GM10248 (cell line): ENCODE measurements at regions of chr6 and their contacts with region 1.

Region 1: GRCh38 chr6:159693128-159693893 is at the start of gene SOD2:
- DNase-seq: peak; percentile 90
- CTCF ChIP-seq: no peak

Region 2: DNA sequence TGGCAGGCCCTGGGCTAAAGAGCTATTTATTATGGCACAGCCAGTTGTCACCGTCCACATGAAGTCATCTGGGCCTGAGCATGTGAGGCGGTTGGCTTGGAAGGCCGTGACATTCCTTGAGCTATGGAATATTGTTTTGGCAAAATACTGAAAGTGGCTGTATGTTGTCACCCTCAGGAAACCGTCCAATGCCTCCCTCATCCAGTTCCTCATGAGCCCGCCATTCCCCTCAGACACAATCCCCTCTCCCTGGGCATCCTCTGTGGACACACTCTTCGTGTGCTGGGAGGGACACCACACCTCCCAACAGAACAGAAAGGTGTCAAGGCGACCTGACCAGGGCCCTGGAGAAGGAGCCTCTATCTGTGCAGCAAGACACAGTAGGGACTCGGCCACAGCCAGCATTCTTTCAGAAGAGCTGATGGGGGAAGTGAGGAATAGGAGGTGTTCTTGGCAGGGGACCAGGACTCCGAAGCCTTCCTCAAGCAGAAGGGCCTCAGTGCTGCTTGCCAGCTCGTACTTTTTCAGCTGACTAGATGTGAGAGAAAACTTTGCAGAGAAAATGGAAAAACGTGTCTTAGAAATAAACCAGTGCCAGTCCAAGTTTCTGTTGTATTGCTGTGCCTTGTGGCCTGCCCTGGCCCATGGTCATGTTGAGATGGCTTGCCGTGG is 120.7 kb before region 1 on chr6:
- CTCF ChIA-PET with region 1: no interaction called
- POLR2A ChIA-PET with region 1: no interaction called
- DNase-seq: no peak
- CTCF ChIP-seq: no peak

Region 3: GRCh38 chr6:159602431-159603041 is 90.8 kb before region 1 on chr6:
- CTCF ChIA-PET with region 1: no interaction called
- POLR2A ChIA-PET with region 1: no interaction called
- DNase-seq: no peak
- CTCF ChIP-seq: no peak

Region 4: GRCh38 chr6:159679091-159680077 is 13.9 kb before region 1 on chr6:
- CTCF ChIA-PET with region 1: interaction called, 11 read pairs
- POLR2A ChIA-PET with region 1: interaction called, 5 read pairs
- DNase-seq: no peak
- CTCF ChIP-seq: no peak

Region 5: GRCh38 chr6:159720708-159721107 is 27.4 kb after region 1 on chr6:
- CTCF ChIA-PET with region 1: interaction called, 23 read pairs
- POLR2A ChIA-PET with region 1: no interaction called
- DNase-seq: peak; percentile 48
- CTCF ChIP-seq: peak; percentile 40